Activated CD4-positive, alpha-beta memory T cell treated with anti-CD3 and anti-CD28 coated beads for 36 hours (primary cell): ENCODE measurements at regions of chr1 and their contacts with region 1.

Region 1: GRCh38 chr1:24364975-24365678 is 46.0 kb downstream of the GRHL3 start:
- DNase-seq: peak; percentile 65
- H3K4me3 Mint-ChIP-seq: no peak overlapping the region
- H3K27ac Mint-ChIP-seq: no peak overlapping the region
- H3K4me1 Mint-ChIP-seq: peaks cover 17% of the 10 kb centered on the region
- H3K27me3 Mint-ChIP-seq: no peaks in the 10 kb centered on the region

Region 2: GRCh38 chr1:24074817-24075725 is 290.1 kb before region 1 on chr1:
- CTCF ChIA-PET with region 1: no interaction called
- POLR2A ChIA-PET with region 1: no interaction called
- intact Hi-C with region 1: no loop called
- DNase-seq: no peak
- H3K4me3 Mint-ChIP-seq: no peak overlapping the region
- H3K27ac Mint-ChIP-seq: no peak overlapping the region
- H3K4me1 Mint-ChIP-seq: peaks cover 2% of the 10 kb centered on the region
- H3K27me3 Mint-ChIP-seq: peaks cover 4% of the 10 kb centered on the region

Region 3: GRCh38 chr1:24277420-24278169 is 87.5 kb before region 1 on chr1:
- CTCF ChIA-PET with region 1: interaction called, 3 read pairs
- POLR2A ChIA-PET with region 1: no interaction called
- intact Hi-C with region 1: loop called (anchors 5 kb)
- DNase-seq: peak; percentile 40
- H3K4me3 Mint-ChIP-seq: no peak overlapping the region
- H3K27ac Mint-ChIP-seq: peak overlapping the region; percentile 20
- H3K4me1 Mint-ChIP-seq: peaks cover 9% of the 10 kb centered on the region
- H3K27me3 Mint-ChIP-seq: peaks cover 20% of the 10 kb centered on the region

Region 4: DNA sequence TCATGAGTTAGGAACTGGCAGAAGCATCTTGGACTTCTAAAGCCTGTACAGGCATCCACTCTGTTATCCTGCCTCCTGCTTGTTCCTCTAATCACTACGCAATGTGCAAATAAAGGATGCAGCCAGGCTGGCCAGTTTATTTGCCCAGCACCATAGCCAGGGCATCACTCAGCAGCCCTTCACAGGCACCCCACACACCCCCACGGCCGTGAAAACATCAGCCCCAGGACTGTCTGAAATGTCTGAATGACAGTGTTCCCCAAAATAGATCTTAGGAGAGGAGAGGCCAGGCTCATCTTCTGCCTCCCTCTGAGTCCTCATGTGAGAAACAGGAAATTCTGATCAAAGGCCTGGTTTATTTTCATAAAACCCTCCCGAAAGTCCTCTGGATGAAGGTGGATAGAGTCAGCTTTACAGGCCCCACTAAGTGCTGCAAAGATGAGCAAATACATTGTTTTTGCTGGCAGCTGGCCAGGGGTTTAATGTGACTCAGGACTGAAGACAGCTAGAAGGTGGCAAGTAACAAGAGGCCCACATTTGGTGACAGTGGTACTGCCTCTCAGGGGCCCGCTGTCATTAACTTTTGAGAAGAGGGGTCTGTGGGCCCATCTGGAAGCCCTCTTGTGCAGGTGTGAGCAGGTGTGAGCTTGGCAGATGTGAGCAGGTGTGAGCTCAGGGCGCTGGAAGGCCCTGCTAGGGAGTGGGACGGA is 13.1 kb before region 1 on chr1:
- CTCF ChIA-PET with region 1: no interaction called
- POLR2A ChIA-PET with region 1: no interaction called
- intact Hi-C with region 1: loop called (anchors 1 kb)
- DNase-seq: peak; percentile 87
- H3K4me3 Mint-ChIP-seq: no peak overlapping the region
- H3K27ac Mint-ChIP-seq: peak overlapping the region; percentile 58
- H3K4me1 Mint-ChIP-seq: peaks cover 36% of the 10 kb centered on the region
- H3K27me3 Mint-ChIP-seq: peaks cover 1% of the 10 kb centered on the region

Region 5: DNA sequence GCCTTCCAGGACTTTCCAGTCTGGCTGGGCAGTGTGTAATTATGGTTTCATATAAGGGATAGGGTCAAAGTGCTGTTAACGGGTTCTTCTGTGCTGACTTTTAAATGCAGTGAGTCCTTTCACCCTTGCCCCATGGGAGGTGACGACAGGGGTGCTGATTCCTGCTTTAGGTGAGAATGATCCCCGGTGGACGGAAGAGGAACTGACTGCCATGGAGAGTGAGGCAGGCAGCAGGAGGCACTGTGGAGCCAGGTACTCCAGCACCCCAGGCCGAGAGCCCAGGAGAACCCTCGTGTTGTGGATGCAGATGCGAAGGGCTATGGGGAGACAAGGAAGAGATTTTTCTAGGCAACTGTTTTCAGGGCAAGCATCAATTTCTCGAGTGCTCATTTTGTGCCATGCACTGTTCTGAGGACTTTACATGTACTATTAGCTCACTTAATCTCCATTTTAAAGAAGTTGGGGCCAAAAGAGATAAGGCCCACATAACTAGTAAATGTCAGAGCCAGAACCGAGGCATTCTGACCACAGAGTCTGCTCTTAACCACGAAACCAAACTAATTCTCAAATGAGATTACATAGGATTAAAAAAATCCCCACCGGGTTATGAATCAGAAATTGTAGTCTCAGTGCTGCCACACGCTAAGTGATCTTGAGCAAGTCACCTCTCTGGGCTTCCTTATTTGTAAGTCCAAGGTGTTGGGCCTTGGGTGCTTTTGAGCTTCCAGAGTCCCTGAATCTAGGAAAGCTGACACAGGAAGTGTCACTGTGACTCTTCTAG is 20.2 kb after region 1 on chr1:
- CTCF ChIA-PET with region 1: interaction called, 30 read pairs
- POLR2A ChIA-PET with region 1: no interaction called
- intact Hi-C with region 1: loop called (anchors 2 kb)
- DNase-seq: peak; percentile 64
- H3K4me3 Mint-ChIP-seq: no peak overlapping the region
- H3K27ac Mint-ChIP-seq: peak overlapping the region; percentile 7
- H3K4me1 Mint-ChIP-seq: peaks cover 26% of the 10 kb centered on the region
- H3K27me3 Mint-ChIP-seq: no peaks in the 10 kb centered on the region

Region 6: DNA sequence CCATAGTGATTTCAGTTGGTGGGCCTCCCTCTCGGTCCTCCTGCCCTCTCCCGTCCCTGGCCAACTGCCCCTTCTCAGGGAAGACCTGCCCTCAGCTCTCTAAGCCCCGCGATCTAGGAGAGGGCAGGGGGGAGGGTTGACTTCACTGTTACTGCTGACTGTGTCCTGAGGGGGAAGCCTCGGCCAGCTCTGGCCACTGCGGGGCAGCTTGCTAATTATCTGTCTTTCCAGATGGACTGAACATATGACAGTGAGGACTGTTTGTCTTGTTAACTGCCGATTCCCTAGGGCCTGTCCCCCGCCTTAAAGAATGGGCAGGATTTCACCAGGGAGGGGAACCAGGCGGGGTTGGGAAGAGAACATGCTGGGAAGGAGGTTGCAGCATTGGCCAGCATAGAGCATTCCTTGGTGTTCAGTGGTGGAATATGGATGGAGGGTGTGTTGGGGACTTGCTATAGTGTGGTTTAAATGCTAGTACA is 73.3 kb after region 1 on chr1:
- CTCF ChIA-PET with region 1: no interaction called
- POLR2A ChIA-PET with region 1: no interaction called
- intact Hi-C with region 1: no loop called
- DNase-seq: no peak
- H3K4me3 Mint-ChIP-seq: no peak overlapping the region
- H3K27ac Mint-ChIP-seq: no peak overlapping the region
- H3K4me1 Mint-ChIP-seq: peaks cover 5% of the 10 kb centered on the region
- H3K27me3 Mint-ChIP-seq: no peaks in the 10 kb centered on the region

Region 7: DNA sequence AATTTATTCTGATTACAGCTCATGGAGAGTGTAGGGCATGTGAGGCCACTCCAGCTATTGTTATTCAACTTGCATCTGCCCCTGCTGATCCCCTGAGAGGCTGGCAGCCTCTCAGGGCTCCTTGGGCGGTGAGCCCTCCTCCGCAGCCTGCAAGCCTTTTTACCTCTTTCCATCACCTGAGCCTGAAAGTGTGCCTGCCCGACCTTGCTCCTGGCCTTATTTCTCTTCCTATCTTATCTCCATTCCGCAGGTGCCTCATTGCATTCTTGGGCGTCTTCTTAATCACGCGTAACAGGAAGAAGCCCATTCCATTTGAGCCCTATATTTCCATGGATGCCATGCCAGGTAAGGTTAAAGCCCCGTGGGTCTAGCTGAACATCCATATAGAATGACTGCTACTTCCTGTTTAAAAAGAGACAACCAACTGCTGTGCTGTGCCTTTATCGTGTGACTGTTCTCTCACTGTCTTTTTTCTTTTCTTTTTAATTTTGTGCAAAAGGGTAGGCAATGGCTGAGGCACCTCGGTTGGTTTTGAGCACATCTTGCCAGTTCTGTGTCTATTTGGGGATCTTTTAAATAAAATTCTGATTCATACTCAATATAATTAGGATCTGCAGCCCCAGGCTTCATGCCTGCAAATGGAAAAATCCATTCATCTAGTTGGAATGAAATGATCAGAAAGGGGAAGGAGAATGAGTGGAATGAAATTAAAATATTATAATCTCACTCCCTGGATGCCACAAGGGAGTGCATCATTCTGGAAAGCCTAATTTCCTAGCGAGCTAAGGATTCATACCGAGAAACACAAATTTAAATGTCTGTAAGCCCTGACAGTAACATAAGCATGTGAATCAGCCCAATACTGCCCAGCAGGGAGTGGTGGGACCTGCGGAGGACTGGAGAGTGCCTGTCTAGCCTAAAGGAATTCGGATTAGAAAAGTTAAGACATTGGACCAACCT is 98.9 kb after region 1 on chr1:
- CTCF ChIA-PET with region 1: no interaction called
- POLR2A ChIA-PET with region 1: no interaction called
- intact Hi-C with region 1: no loop called
- DNase-seq: no peak
- H3K4me3 Mint-ChIP-seq: no peak overlapping the region
- H3K27ac Mint-ChIP-seq: peak overlapping the region; percentile 14
- H3K4me1 Mint-ChIP-seq: peaks cover 28% of the 10 kb centered on the region
- H3K27me3 Mint-ChIP-seq: no peaks in the 10 kb centered on the region